GM12878 (cell line): ENCODE measurements at regions of chr6 and their contacts with region 1.

Region 1: GRCh38 chr6:166950443-166950821 is 5.9 kb downstream of the RNASET2 start:
- DNase-seq: no peak
- ATAC-seq: peak; percentile 68
- H3K4me3 ChIP-seq: peak overlapping the region; percentile 71
- H3K27ac ChIP-seq: peak overlapping the region; percentile 96
- H3K4me1 ChIP-seq: peaks cover 42% of the 10 kb centered on the region
- H3K27me3 ChIP-seq: no peaks in the 10 kb centered on the region
- CTCF ChIP-seq: no peak
- EP300 ChIP-seq: no peak
- POLR2A ChIP-seq: peak; percentile 76
- RAD21 ChIP-seq: no peak

Region 2: GRCh38 chr6:166775180-166776081 is 175.0 kb before region 1 on chr6:
- CTCF ChIA-PET with region 1: interaction called, 26 read pairs
- POLR2A ChIA-PET with region 1: no interaction called
- RAD21 ChIA-PET with region 1: interaction called, 5 read pairs
- SMC1A ChIA-PET with region 1: interaction called, 5 read pairs
- in situ Hi-C with region 1: no loop called
- intact Hi-C with region 1: no loop called
- DNase-seq: no peak
- ATAC-seq: peak; percentile 94
- H3K4me3 ChIP-seq: no peak overlapping the region
- H3K27ac ChIP-seq: no peak overlapping the region
- H3K4me1 ChIP-seq: no peaks in the 10 kb centered on the region
- H3K27me3 ChIP-seq: peaks cover 0 to 2% of the 10 kb centered on the region in 2 experiments; a peak in 1 of 4 replicates
- CTCF ChIP-seq: peak; percentile 84 to 91 (median 88)
- EP300 ChIP-seq: no peak
- POLR2A ChIP-seq: no peak
- RAD21 ChIP-seq: peak; percentile 96

Region 3: GRCh38 chr6:166830185-166830890 is 120.1 kb before region 1 on chr6:
- CTCF ChIA-PET with region 1: no interaction called
- POLR2A ChIA-PET with region 1: interaction called, 3 read pairs
- RAD21 ChIA-PET with region 1: interaction called, 5 read pairs
- SMC1A ChIA-PET with region 1: interaction called, 10 read pairs
- in situ Hi-C with region 1: no loop called
- intact Hi-C with region 1: loop called (anchors 1 kb)
- DNase-seq: peak; percentile 80
- ATAC-seq: peak; percentile 94
- H3K4me3 ChIP-seq: peak overlapping the region; percentile 3; the same call in 1 of the 2 replicates
- H3K27ac ChIP-seq: peak overlapping the region; percentile 99
- H3K4me1 ChIP-seq: peaks cover 19% of the 10 kb centered on the region
- H3K27me3 ChIP-seq: no peaks in the 10 kb centered on the region
- CTCF ChIP-seq: no peak
- EP300 ChIP-seq: peak; percentile 28 to 35; a peak in 2 of 4 replicates
- POLR2A ChIP-seq: no peak; the same call in 1 of the 2 replicates
- RAD21 ChIP-seq: no peak

Region 4: GRCh38 chr6:166872496-166873125 is 77.8 kb before region 1 on chr6:
- CTCF ChIA-PET with region 1: no interaction called
- POLR2A ChIA-PET with region 1: no interaction called
- RAD21 ChIA-PET with region 1: no interaction called
- SMC1A ChIA-PET with region 1: no interaction called
- in situ Hi-C with region 1: no loop called
- intact Hi-C with region 1: no loop called
- DNase-seq: no peak
- ATAC-seq: no peak
- H3K4me3 ChIP-seq: no peak overlapping the region
- H3K27ac ChIP-seq: no peak overlapping the region
- H3K4me1 ChIP-seq: no peaks in the 10 kb centered on the region
- H3K27me3 ChIP-seq: no peaks in the 10 kb centered on the region
- CTCF ChIP-seq: no peak
- EP300 ChIP-seq: no peak
- POLR2A ChIP-seq: no peak
- RAD21 ChIP-seq: no peak

Region 5: DNA sequence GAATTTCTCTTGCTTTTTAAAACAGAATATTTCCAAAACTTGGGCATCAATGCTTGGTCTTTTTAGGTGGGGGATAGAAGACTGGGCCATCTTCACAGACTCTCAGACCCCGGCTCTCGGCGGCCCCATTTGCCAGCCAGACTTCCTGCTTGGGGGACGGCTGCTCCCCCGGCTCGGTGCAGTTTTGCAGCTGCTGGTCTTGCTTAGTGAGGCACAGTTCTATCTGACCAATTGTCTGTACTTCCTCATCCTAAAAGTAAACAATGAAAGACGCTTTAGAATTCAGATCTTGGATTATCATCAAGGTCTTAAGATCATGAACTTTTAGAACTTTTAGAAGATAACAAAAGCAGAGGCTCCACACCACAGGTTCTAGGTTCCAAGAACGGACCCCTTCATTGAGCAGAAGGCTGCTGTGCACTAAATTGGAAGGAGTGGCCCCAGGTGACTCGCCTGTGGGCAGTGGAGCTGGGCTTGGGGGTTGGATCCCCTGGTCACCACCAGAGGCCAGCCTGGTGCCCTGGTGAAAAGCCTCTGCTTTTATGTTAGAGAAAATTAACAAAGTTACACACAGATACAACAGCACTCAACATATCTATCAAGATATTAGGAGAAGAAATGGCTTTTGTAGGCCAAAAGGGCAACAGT is 20.8 kb before region 1 on chr6:
- CTCF ChIA-PET with region 1: interaction called, 4 read pairs
- POLR2A ChIA-PET with region 1: interaction called, 12 read pairs
- RAD21 ChIA-PET with region 1: interaction called, 4 read pairs
- SMC1A ChIA-PET with region 1: interaction called, 8 read pairs
- in situ Hi-C with region 1: no loop called
- intact Hi-C with region 1: no loop called
- DNase-seq: no peak
- ATAC-seq: no peak
- H3K4me3 ChIP-seq: no peak overlapping the region
- H3K27ac ChIP-seq: no peak overlapping the region
- H3K4me1 ChIP-seq: no peaks in the 10 kb centered on the region
- H3K27me3 ChIP-seq: no peaks in the 10 kb centered on the region
- CTCF ChIP-seq: 0 out of 6 replicates have a peak, but pooled peaks of 1 of the 3 experiments have one; percentile 3
- EP300 ChIP-seq: no peak
- POLR2A ChIP-seq: no peak
- RAD21 ChIP-seq: no peak

Region 6: DNA sequence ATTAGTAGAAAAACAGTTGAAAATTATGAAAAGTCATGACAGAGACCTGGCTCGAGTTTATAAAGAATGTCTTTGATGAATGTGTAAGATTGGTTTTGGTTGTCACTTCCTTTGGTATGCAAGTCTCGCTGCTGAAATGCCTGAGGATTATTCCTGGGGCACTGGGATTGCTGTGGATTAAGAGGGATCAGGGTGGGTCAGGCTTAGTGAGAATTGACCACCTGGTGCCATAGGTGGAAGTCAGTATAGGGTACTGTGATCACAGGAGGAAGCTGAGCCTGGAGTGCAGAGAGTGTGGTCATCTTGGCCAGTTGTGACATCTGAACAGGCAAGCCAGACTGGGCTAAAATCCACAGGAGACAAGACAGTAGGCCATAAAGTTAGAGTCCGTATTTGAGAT is 83.6 kb after region 1 on chr6:
- CTCF ChIA-PET with region 1: no interaction called
- POLR2A ChIA-PET with region 1: no interaction called
- RAD21 ChIA-PET with region 1: no interaction called
- SMC1A ChIA-PET with region 1: no interaction called
- in situ Hi-C with region 1: no loop called
- intact Hi-C with region 1: no loop called
- DNase-seq: no peak
- ATAC-seq: no peak
- H3K4me3 ChIP-seq: no peak overlapping the region
- H3K27ac ChIP-seq: no peak overlapping the region
- H3K4me1 ChIP-seq: no peaks in the 10 kb centered on the region
- H3K27me3 ChIP-seq: no peaks in the 10 kb centered on the region
- CTCF ChIP-seq: no peak
- EP300 ChIP-seq: no peak
- POLR2A ChIP-seq: no peak
- RAD21 ChIP-seq: no peak

Region 7: GRCh38 chr6:167153521-167153959 is 203.1 kb after region 1 on chr6:
- CTCF ChIA-PET with region 1: interaction called, 5 read pairs
- POLR2A ChIA-PET with region 1: interaction called, 3 read pairs
- RAD21 ChIA-PET with region 1: no interaction called
- SMC1A ChIA-PET with region 1: interaction called, 9 read pairs
- in situ Hi-C with region 1: no loop called
- intact Hi-C with region 1: loop called (anchors 2 kb)
- DNase-seq: peak; percentile 78
- ATAC-seq: peak; percentile 71
- H3K4me3 ChIP-seq: peak overlapping the region; percentile 54
- H3K27ac ChIP-seq: peak overlapping the region; percentile 70
- H3K4me1 ChIP-seq: peaks cover 30% of the 10 kb centered on the region
- H3K27me3 ChIP-seq: no peaks in the 10 kb centered on the region; a peak in 1 of 4 replicates
- CTCF ChIP-seq: no peak
- EP300 ChIP-seq: peak; percentile 81; a peak in 3 of 4 replicates
- POLR2A ChIP-seq: no peak
- RAD21 ChIP-seq: no peak